ENCODE measurements at regions of chr17 and their contacts with region 1.

Region 1: DNA sequence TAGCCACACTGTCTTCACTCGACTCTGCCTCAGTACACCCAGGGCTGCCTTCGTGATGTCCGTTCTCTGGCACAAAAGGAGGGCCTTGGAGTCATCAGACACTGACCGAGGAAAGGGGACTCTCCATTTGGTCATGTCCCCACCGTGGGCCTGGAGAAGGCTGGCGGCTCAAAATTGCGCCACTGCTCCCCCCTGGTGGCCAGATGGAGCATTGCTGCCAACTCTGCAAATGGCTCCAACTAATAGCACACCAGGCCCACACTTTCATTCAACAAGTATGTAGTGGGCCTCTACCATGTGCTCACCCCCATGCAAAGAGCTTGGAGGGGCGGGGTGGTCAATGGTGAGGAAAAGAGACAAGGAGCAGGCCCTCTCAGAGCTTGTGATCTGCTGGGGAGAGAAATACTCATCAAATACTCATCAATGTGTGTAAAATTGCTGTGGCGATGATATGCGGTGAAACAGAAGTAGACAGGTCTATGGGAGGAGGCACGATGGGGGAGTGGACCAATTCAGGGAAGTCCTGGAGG is 5.2 kb upstream of the GRIN2C start:
- DNase-seq: peak in 2 of 3 donors; percentile 84 to 87
- ATAC-seq: peak; percentile 77
- H3K4me3 ChIP-seq: no peak overlapping the region
- H3K4me1 ChIP-seq: peaks cover 19% of the 10 kb centered on the region
- CTCF ChIP-seq: peak; percentile 92

Region 2: GRCh38 chr17:74744714-74745547 is 120.0 kb before region 1 on chr17:
- intact Hi-C with region 1: loop called (anchors 5 kb)
- DNase-seq: peak; percentile 90 to 98 (median 97)
- ATAC-seq: peak; percentile 65
- H3K4me3 ChIP-seq: no peak overlapping the region
- H3K4me1 ChIP-seq: peaks cover 24% of the 10 kb centered on the region
- CTCF ChIP-seq: peak; percentile 100

Region 3: DNA sequence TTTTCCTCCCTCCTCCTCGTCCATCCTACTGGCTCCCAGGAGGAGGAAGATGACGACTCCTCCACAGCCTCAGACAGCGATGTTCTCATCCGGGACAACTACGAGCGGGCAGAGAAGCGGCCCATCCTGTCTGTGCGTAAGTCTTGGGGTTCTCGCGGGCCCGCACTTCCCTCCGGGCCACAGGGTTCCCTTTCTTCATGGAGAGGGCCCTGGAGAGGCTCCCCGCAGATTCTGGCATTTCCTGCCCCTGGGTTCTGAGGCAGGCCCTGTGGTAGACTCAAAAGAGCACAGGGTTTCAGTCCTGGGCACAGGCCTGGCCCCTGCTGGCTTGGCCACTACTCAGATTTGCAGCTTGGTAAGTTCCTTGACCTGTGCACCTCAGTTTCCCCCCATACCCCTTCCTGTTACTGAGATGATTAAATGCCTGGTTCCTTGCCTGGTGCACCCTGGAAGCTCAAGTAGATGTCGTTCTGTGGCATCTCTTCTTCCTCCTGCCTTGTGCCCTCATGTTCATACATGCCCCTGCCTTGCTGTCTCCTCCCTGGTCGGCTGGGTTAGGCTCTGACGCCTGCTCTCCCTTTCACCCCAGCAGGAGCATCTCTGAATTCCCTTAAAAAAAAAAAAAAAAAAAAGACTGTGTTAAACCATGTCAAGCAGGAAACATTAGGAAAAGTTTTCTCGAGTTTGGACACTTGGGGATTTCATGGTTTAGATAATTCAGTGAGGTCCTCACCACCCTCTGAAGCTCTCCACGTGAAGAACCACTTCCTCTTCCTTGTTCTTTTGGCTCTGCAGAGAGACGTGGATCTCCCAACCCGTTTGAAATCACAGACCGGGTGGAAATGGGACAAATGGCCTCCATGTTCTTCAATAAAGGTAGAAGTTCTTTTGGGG is 74.5 kb before region 1 on chr17:
- intact Hi-C with region 1: loop called (anchors 2 to 5 kb)
- DNase-seq: no peak
- ATAC-seq: no peak
- H3K4me3 ChIP-seq: no peak overlapping the region
- H3K4me1 ChIP-seq: no peaks in the 10 kb centered on the region
- CTCF ChIP-seq: no peak

Region 4: DNA sequence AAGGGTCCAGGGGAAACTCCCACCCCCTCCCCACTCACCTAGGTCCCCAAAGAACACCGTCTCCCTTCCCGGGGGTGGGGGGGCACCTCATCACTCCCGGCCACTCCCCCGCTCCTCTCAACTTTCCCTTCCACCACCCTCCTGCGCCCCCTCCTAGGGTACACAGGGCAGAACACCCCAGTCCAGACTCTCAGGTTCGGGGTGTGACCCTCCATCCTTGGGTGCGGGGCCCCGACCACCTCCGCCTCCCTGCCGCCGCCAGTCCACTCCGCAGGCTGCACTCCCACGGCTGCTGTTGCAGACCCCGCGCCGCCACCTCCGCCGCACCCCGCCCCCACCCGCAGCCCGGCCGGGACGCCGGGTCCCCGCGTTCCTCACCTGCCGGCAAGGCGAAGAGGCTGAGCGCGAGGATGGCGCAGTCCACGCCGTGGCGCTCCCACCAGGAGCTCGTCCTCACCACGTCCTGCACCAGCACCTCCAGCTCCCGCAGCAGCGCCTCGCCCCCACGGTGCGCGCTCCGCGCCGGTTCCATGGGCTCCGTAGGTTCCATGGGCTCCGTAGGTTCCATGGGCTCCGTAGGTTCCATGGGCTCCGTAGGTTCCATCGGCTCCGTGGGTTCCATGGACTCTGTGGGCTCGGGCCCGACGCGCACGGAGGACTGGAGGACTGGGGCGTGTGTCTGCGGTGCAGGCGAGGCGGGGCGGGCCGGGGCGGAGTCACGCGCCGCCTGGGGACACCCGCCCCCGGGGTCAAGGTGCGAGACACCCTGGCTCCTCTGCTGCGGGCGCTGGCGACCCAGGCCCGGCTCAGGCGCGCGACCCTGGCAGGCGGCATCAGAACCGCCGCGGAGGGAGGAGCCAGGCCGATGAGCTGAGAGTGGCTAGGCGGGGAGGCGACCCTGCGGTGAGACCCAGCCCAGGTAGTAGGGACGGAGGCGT is 28.3 kb after region 1 on chr17 and contains the start of gene FADS6:
- intact Hi-C with region 1: no loop called
- DNase-seq: peak in 2 of 3 donors; percentile 33 to 51
- ATAC-seq: peak; percentile 70
- H3K4me3 ChIP-seq: no peak within 1 kb of the TSS
- H3K4me1 ChIP-seq: peaks cover 7% of the 10 kb centered on the region
- CTCF ChIP-seq: no peak
- total RNA-seq, gene FADS6: 0.14 to 4.2 (median 1.1) TPM

Region 5: GRCh38 chr17:74935585-74936469 is 70.9 kb after region 1 on chr17 and contains the start of gene OTOP3:
- intact Hi-C with region 1: no loop called
- DNase-seq: no peak
- ATAC-seq: peak; percentile 23
- H3K4me3 ChIP-seq: no peak within 1 kb of the TSS
- H3K4me1 ChIP-seq: peaks cover 8% of the 10 kb centered on the region
- CTCF ChIP-seq: no peak
- total RNA-seq, gene OTOP3: 0.38 to 2.8 (median 1.5) TPM

Measured in mucosa of descending colon (tissue), 3 donors.